Activated CD8-positive, alpha-beta T cell treated with anti-CD3 and anti-CD28 coated beads, Interleukin-2, amount 10 ng/mL, durations not matched to agents 7 days and 5 days (primary cell): ENCODE measurements at regions of chr1 and their contacts with region 1.

Region 1: DNA sequence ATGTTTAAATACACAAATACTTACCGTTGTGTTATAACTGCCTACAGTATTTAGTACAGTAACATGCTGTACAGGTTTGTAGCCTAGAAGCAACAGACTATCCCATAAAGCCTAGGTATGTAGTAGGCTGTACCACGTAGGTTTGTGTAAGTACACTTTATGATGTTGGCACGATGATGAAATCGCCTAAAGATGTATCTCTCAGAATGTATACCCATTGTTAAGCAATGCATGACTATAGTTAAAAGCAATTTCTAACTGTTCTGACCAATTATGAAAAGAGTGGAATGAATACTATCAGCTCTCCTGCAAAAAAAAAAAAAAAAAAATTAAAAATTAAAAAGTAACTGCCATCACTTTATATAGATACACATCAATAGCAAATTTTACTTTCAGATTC is 11.4 kb downstream of the HP1BP3 start:
- DNase-seq: no peak
- ATAC-seq: no peak
- H3K4me3 Mint-ChIP-seq: no peak overlapping the region
- H3K27ac Mint-ChIP-seq: no peak overlapping the region
- H3K4me1 Mint-ChIP-seq: peaks cover 5% of the 10 kb centered on the region
- H3K27me3 Mint-ChIP-seq: no peaks in the 10 kb centered on the region

Region 2: GRCh38 chr1:20390589-20391331 is 384.9 kb before region 1 on chr1:
- CTCF ChIA-PET with region 1: no interaction called
- POLR2A ChIA-PET with region 1: no interaction called
- DNase-seq: no peak
- ATAC-seq: no peak
- H3K4me3 Mint-ChIP-seq: no peak overlapping the region
- H3K27ac Mint-ChIP-seq: no peak overlapping the region
- H3K4me1 Mint-ChIP-seq: no peaks in the 10 kb centered on the region
- H3K27me3 Mint-ChIP-seq: peaks cover 41% of the 10 kb centered on the region

Region 3: GRCh38 chr1:20786253-20787028 is 10.7 kb after region 1 on chr1:
- CTCF ChIA-PET with region 1: interaction called, 5 read pairs
- POLR2A ChIA-PET with region 1: interaction called, 11 read pairs
- DNase-seq: peak; percentile 95
- ATAC-seq: peak; percentile 84
- H3K4me3 Mint-ChIP-seq: peak overlapping the region; percentile 91
- H3K27ac Mint-ChIP-seq: peak overlapping the region; percentile 97
- H3K4me1 Mint-ChIP-seq: peaks cover 31% of the 10 kb centered on the region
- H3K27me3 Mint-ChIP-seq: no peaks in the 10 kb centered on the region

Region 4: GRCh38 chr1:20885121-20885520 is 109.4 kb after region 1 on chr1:
- CTCF ChIA-PET with region 1: no interaction called
- POLR2A ChIA-PET with region 1: no interaction called
- DNase-seq: no peak
- ATAC-seq: no peak
- H3K4me3 Mint-ChIP-seq: no peak overlapping the region
- H3K27ac Mint-ChIP-seq: no peak overlapping the region
- H3K4me1 Mint-ChIP-seq: no peaks in the 10 kb centered on the region
- H3K27me3 Mint-ChIP-seq: no peaks in the 10 kb centered on the region